WTC11 (cell line): ENCODE measurements at regions of chr13 and their contacts with region 1.

Region 1: DNA sequence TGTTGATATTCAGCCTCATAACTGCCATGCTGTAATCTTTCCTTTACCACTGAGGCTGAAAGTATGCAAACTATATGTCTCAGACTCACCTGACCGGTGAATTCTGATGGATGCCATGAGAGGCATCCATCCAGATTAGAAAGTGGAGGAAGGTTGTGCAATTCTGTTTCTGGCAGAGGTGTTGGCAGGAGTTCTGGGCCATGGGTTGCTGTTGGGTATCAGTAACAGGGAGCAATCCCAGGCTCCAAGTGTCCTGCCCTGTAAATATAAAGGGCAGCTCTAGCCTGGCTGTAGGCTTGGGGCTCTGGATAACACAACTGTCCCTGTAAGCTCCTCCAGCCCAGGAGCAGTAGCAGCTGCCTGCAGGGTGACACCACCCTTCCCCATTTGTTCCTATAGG is 77.4 kb upstream of the ABCC4 start:
- DNase-seq: no peak
- ATAC-seq: no peak
- H3K4me3 Mint-ChIP-seq: no peak overlapping the region
- H3K27ac Mint-ChIP-seq: no peak overlapping the region
- H3K4me1 Mint-ChIP-seq: peaks cover 6% of the 10 kb centered on the region
- H3K27me3 Mint-ChIP-seq: no peaks in the 10 kb centered on the region
- CTCF ChIP-seq: no peak

Region 2: DNA sequence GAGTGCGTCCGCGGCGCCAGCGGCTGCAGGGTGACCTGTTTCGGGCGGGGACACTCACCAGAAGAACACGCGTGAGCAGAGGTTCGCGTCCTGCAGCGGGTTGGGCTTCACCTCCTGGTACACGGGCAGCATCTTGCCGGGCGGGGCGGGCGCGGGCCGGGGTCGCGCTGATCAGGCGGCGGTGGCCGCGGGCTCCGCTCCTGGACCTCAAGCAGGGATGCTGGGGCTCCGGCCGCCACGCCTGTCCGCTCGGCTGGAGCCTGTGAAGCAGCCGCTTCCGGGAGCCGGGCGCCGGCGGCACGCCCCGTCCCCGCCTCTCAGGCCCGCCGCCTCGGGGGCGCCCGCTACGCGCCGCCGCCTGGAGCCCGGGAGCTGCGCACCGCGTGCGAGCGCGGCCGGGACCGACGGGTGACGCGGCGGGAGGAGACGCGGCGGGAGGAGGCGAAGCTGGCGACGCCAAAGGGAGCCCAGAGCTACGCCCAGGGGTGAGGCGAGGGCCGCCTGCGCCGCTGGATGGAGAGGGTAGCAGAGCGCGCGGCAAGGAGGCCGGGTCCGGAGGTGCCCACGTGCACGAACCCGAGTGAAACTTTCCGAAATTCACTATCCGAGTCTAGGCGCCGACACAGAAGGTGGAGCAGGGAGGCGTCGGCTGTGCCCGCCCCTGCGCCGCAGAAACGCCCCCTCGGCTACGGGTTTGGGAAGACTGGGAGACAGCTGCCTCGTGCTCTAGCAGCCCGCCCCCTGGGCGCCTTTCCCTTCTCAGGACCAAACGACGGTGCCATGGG is 77.2 kb before region 1 on chr13 and contains the start of gene ABCC4:
- CTCF ChIA-PET with region 1: interaction called, 44 read pairs
- POLR2A ChIA-PET with region 1: interaction called, 6 read pairs
- DNase-seq: peak; percentile 69
- ATAC-seq: peak; percentile 76
- H3K4me3 Mint-ChIP-seq: peak within 1 kb of the TSS; percentile 80
- H3K27ac Mint-ChIP-seq: no peak within 1 kb of the TSS
- H3K4me1 Mint-ChIP-seq: peaks cover 11% of the 10 kb centered on the region
- H3K27me3 Mint-ChIP-seq: peaks cover 41% of the 10 kb centered on the region
- CTCF ChIP-seq: no peak
- total RNA-seq, gene ABCC4: 7.2 to 7.8 TPM (median 7.2 TPM) in 3 replicates

Region 3: DNA sequence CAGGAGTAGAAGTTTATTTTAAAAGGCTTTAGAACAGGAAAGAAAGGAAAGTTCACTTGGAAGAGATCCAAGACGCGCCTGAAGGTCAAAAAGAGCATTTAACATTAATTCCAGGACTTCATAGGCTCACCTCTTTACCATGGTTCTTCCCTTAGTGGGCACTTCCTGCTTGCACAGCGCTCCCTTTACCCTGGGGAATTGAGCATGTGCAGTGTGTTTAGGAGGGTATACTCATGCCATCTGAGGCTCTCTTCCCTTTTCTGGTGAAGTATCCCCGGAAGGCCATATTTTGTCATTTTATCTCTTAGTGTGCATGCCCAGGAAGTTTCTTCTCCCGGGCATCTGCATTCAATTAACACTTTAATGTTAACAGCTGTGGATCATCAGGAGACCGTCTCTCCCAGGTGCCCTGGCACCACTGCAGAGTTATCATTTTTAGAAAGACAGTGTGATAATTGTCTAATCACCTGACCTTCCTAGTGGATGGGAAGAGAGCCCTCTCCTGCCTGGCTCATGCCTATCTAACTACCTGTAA is 11.2 kb before region 1 on chr13:
- CTCF ChIA-PET with region 1: interaction called, 13 read pairs
- POLR2A ChIA-PET with region 1: no interaction called
- DNase-seq: no peak
- ATAC-seq: no peak
- H3K4me3 Mint-ChIP-seq: no peak overlapping the region
- H3K27ac Mint-ChIP-seq: no peak overlapping the region
- H3K4me1 Mint-ChIP-seq: no peaks in the 10 kb centered on the region
- H3K27me3 Mint-ChIP-seq: no peaks in the 10 kb centered on the region
- CTCF ChIP-seq: no peak

Region 4: DNA sequence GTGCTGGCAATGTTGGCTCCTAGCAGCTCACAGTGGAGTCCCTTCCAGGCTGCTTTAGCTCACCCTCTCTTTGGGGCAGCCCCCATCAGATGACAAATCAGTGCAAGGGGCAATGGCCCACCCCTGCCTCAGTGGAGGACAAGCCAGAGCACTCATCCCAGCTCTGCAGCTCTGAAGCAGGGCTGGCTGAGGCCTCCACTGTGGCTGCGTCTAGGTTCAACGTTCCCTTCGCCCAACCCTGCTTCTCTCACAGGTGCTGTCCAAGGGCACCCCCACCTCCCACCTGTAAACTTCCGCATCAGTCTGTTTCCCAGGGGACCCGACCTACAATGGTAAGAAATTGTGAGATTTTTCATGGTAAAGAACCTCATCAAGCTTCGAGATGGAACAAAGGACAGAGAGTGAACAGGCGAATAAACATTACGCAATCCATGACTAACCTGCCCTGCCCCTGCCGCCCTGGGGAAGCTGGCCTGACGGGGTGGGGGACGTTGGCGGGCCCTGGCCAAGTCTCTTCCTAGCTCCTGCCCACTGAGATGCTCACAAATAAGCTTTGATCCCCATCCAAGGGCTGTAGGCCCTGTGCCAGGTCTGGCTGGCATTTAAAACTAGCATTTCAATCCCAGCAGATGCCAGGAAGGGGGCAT is 225.4 kb after region 1 on chr13:
- CTCF ChIA-PET with region 1: no interaction called
- POLR2A ChIA-PET with region 1: no interaction called
- DNase-seq: no peak
- ATAC-seq: no peak
- H3K4me3 Mint-ChIP-seq: no peak overlapping the region
- H3K27ac Mint-ChIP-seq: no peak overlapping the region
- H3K4me1 Mint-ChIP-seq: peaks cover 5% of the 10 kb centered on the region; the same call in 1 of the 2 replicates
- H3K27me3 Mint-ChIP-seq: no peaks in the 10 kb centered on the region
- CTCF ChIP-seq: no peak

Region 5: DNA sequence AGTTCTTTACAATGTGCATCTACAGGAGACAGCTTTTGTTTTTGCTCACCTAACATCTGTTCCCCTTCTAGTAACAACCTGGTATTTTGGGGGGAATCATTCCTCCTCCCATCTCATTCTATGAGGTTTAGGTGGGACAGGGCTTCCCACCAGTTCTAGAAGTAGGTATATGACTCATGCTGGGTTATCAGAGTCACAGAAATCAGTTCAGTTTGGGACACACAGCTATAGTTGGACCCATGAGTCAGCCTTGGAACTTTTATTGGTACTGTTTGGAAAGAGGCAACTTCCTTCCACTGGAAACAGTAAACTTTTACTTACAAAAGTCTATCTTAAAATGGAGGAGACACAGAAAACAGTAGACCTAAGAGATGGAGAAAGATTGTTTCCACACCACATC is 483.8 kb after region 1 on chr13:
- CTCF ChIA-PET with region 1: no interaction called
- POLR2A ChIA-PET with region 1: no interaction called
- DNase-seq: no peak
- ATAC-seq: no peak
- H3K4me3 Mint-ChIP-seq: no peak overlapping the region
- H3K27ac Mint-ChIP-seq: no peak overlapping the region
- H3K4me1 Mint-ChIP-seq: no peaks in the 10 kb centered on the region
- H3K27me3 Mint-ChIP-seq: no peaks in the 10 kb centered on the region
- CTCF ChIP-seq: no peak